ENCODE measurements at regions of chr6 and their contacts with region 1.

Region 1: GRCh38 chr6:27295301-27296081 is 16.6 kb downstream of the POM121L2 start:
- DNase-seq: no peak
- H3K4me3 Mint-ChIP-seq: no peak overlapping the region
- H3K27ac Mint-ChIP-seq: peak overlapping the region; percentile 36
- H3K4me1 Mint-ChIP-seq: peaks cover 1% of the 10 kb centered on the region
- H3K27me3 Mint-ChIP-seq: peaks cover 60% of the 10 kb centered on the region

Region 2: GRCh38 chr6:27352850-27353249 is 57.4 kb after region 1 on chr6:
- intact Hi-C with region 1: no loop called
- DNase-seq: no peak
- H3K4me3 Mint-ChIP-seq: no peak overlapping the region
- H3K27ac Mint-ChIP-seq: no peak overlapping the region
- H3K4me1 Mint-ChIP-seq: no peaks in the 10 kb centered on the region
- H3K27me3 Mint-ChIP-seq: no peaks in the 10 kb centered on the region

Region 3: GRCh38 chr6:27558028-27558724 is 262.7 kb after region 1 on chr6:
- intact Hi-C with region 1: loop called (anchors 5 kb)
- DNase-seq: no peak
- H3K4me3 Mint-ChIP-seq: peak overlapping the region; percentile 63
- H3K27ac Mint-ChIP-seq: no peak overlapping the region
- H3K4me1 Mint-ChIP-seq: peaks cover 6% of the 10 kb centered on the region
- H3K27me3 Mint-ChIP-seq: peaks cover 70% of the 10 kb centered on the region

Region 4: DNA sequence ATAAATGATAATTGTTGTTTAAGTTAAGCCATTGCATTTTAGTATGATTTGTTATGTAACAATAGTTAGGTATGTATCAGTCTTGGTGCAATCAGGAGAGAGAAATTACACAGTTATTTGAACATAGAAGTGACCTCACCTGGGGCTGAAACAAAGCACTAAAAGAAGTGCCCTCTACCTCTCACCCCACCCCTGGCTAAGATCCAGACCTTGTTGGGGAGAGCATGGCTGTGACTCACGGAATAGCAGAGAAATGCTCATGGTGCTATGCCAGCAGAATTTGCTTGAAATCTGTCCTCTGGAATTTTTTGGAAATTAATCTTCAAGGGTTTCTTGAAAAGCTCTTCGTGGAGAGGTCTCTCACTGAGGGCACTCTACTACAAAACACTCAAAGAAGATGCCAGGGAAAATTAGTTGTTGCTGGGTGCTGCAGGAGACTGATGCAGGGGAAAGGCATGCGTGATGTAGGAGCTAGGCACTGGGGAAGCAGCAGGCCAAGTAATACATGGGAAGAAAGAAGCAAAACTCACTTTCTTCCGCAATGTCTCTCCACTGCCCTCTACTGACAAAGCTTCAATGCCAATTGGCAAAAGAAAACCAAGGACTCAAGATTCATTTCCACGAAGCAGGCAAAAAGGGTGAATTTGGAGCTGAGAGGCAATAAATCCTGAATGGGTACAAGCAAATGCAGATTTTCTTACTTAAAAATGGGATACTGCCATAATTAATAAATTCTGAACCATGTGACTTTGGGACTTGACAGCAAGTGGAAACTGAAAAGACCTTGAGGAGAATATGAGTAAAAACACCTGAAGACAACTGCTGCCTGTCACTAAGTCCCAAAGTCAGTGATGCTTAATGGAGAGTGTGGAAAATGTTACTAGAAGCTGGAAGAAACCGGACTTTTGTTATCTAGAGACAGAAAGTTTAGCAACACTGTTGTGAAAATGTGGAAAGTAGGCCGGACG is 313.7 kb after region 1 on chr6:
- intact Hi-C with region 1: loop called (anchors 5 kb)
- DNase-seq: peak; percentile 76
- H3K4me3 Mint-ChIP-seq: no peak overlapping the region
- H3K27ac Mint-ChIP-seq: no peak overlapping the region
- H3K4me1 Mint-ChIP-seq: peaks cover 15% of the 10 kb centered on the region
- H3K27me3 Mint-ChIP-seq: peaks cover 28% of the 10 kb centered on the region

Region 5: DNA sequence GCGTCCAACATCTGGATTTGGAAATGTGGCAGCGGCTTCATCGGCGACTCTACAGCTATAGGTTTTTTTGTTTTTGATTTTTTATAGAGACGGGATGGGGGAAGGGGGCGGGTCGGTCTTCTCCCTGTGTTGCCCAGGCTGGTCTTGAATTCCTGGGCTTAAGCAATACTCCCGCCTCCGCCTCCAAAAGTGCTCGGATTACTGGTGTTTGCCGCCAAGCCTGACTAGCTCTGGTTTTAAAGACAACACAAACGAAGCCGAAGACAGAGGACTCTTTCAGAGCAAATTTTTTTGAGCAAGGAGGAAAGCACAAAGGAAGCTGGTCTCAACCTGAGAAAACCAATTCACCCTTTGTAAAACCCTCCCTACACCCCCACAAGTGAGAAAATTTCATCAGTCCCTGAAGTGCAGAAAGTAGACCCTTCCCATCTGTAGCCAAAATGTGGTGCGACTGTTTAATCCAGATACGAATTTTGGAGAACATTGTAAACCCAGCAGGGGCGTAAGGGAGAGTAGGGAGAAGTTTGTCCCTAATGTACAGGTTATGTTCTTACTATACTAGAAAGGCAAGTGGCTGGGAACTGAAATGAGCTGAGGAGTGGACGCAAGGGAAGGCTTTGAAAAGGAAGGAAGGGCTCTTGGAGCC is 1442.4 kb after region 1 on chr6:
- intact Hi-C with region 1: loop called (anchors 2 kb)
- DNase-seq: no peak
- H3K4me3 Mint-ChIP-seq: no peak overlapping the region
- H3K27ac Mint-ChIP-seq: no peak overlapping the region
- H3K4me1 Mint-ChIP-seq: peaks cover 5% of the 10 kb centered on the region
- H3K27me3 Mint-ChIP-seq: peaks cover 64% of the 10 kb centered on the region

Measured in activated CD4-positive, alpha-beta T cell treated with anti-CD3 and anti-CD28 coated beads, Interleukin-2, amount 10 ng/mL, durations not matched to agents 24 days and 14 days (primary cell).